ENCODE measurements at regions of chr3 and their contacts with region 1.

Region 1: GRCh38 chr3:180383332-180384020 is 218.5 kb upstream of the TTC14 start:
- DNase-seq: no peak
- ATAC-seq: no peak
- H3K4me3 Mint-ChIP-seq: no peak overlapping the region
- H3K27ac Mint-ChIP-seq: no peak overlapping the region
- H3K4me1 Mint-ChIP-seq: peaks cover 10% of the 10 kb centered on the region
- H3K27me3 Mint-ChIP-seq: no peaks in the 10 kb centered on the region
- CTCF ChIP-seq: no peak

Region 2: GRCh38 chr3:180530276-180530675 is 146.8 kb after region 1 on chr3:
- CTCF ChIA-PET with region 1: no interaction called
- POLR2A ChIA-PET with region 1: interaction called, 12 read pairs
- DNase-seq: no peak
- ATAC-seq: no peak
- H3K4me3 Mint-ChIP-seq: no peak overlapping the region
- H3K27ac Mint-ChIP-seq: no peak overlapping the region
- H3K4me1 Mint-ChIP-seq: no peaks in the 10 kb centered on the region
- H3K27me3 Mint-ChIP-seq: no peaks in the 10 kb centered on the region
- CTCF ChIP-seq: no peak

Region 3: DNA sequence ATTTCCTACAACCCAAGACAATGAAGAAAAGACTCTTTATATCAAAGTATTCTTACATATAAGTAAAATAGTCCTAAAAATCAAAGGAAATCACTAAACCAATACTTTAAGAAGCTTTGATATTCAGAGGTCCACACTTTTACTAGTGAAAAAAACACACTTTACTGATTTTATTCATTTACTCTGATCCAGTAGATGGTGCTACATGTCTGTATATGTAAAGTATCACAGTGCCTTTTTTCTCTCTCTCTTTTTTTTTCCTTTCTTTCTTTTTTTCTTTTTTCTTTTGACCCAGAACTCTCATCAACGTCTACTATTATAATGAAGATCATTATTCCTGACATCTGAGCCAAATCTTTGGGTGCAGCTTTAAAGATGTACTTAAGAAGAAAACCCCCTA is 306.6 kb after region 1 on chr3:
- CTCF ChIA-PET with region 1: no interaction called
- POLR2A ChIA-PET with region 1: no interaction called
- DNase-seq: no peak
- ATAC-seq: no peak
- H3K4me3 Mint-ChIP-seq: no peak overlapping the region
- H3K27ac Mint-ChIP-seq: no peak overlapping the region
- H3K4me1 Mint-ChIP-seq: peaks cover 6% of the 10 kb centered on the region
- H3K27me3 Mint-ChIP-seq: no peaks in the 10 kb centered on the region
- CTCF ChIP-seq: no peak